Posterior vena cava (tissue), 2 donors: ENCODE measurements at regions of chr2 and their contacts with region 1.

Region 1: DNA sequence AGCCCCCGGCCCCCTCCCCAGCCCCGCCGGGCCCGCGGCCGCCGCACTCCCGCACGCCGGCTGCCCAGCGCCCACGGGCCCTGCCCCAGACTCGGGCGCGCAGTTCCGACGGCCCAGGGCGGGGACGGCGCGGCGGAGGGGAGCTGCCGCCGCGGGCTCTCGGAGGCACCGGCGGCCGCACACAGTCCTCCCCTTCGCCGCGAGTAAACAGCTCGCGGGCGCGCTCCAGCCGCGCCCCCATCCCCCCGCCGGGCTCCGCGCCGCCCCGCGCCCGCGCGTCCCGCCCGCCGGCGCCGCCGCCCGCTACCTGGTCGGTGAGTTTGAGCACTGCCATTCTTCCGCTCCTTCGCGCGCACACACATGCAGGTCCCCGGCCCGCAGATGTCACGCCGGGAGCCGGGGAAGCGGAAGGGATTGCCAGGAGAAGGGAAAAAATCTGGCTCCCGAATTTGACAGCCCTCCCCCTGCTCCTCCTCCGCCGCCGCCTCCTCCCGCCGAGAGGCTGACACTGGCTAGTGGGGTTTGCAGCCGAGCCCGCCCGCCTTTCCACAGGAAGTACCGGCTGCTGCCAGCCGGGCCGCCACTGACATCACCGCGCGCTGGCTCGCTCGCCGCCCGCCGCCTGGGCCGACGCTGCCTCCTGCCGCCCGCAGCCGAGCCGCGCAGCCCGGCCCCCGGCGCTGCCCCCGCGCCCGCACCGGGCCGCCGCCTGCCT is at the start of gene ANKRD44:
- DNase-seq: peak; percentile 98
- total RNA-seq, gene ANKRD44: 21.2 to 24.5 TPM

Region 2: DNA sequence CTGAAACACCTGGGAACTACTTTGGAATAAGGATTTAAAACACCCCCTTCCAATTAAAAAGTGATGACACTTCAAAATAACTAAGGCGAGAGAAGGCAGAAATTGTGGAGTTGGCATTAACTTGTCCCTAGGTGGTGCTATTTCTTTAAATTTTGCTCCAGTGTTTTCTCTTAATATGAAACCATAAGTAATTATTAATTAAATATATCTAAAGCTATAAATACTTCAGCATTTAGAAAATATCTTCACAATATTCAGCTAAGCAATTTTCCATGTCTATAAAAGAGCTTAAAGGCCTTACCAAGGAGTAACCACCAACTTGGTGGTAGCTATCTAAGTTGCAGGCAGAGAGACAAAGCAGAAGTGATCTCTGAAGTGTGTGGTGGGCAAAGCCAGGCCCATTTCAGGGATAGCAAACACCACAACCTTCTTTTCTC is 197.1 kb before region 1 on chr2:
- intact Hi-C with region 1: loop called in 1 of 2 experiments (anchors 5 kb)
- DNase-seq: no peak

Region 3: GRCh38 chr2:197191177-197191939 is 119.1 kb before region 1 on chr2:
- intact Hi-C with region 1: loop called in 1 of 2 experiments (anchors 5 kb)
- DNase-seq: no peak

Region 4: DNA sequence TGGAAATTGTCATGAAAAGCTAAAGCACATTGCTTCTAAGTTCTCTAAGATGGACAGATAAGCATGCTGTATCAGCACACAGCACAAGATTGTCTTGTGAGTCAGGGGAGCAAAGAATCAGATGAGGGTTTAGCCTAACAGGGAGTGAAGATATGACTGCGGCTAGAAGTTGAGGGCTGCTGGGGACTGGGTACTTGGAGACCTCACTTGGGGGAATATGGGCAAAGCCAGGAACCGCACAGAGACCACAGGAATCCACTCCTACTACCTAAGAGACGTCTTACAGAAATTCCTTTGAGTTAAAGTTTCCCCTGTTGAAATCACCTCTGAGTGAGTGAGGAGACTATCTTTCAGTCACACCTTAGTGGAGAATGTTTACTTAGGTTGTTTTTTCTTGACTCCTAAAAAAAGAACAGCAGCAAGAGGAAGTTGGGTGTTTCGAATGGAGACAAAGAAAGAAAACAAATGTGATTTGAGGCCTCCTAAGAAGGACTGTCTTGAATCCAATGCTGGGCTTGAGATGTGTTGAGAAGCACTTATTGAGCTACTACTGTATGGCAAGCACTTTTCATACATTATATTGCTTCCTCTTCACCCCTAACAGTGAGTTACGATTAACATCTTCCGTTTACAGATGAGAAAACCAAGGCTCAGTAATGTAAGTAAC is 100.6 kb before region 1 on chr2:
- intact Hi-C with region 1: loop called in 1 of 2 experiments (anchors 10 kb)
- DNase-seq: no peak

Region 5: DNA sequence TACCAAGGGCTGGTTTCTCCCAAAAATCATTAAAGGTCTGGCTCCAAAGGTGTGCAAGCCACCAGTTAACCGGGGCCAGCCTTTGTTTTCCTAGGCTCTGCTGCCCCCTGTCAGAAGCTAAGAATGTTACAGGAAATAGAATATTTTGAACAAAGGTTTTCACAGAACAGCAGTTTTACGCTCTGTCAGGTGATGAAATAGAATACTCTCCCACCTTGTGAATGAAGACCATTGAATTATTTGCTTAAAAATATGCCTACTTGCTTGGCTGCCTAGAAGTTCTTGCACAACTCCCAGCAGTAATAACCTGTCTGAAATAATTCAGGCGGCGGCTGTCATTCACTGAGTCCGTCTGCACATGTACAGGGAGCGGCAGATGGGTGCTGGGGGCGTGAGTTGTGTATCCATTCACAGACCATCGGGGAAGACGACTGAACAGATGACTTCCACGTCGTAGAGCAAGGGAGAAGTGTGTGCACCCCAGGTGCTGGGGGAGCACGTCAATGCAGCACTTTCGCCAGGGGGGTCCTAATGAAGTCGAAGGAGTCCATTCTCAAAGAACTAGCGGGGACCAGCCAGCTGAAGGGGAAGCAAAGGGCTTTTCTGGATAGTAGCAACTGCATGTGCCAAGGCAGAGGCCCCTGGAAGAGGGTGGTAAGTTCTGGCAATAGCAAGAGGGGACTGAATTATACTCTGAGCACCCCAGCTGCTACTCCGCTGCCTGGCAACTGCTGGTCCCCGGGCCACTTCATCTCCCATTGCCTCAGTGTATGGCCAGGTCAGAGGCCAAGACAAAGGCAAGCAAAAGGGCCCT is 68.3 kb after region 1 on chr2:
- intact Hi-C with region 1: loop called in 1 of 2 experiments (anchors 10 kb)
- DNase-seq: no peak